Pancreas (tissue), 10 donors: ENCODE measurements at regions of chr4 and their contacts with region 1.

Region 1: GRCh38 chr4:83639849-83640493 is 104.1 kb downstream of the GPAT3 start:
- DNase-seq: peak in 3 of 6 donors; percentile 33 to 66 (median 51)
- ATAC-seq: peak; percentile 83 to 96 (median 90)
- H3K4me3 ChIP-seq: no peak overlapping the region
- H3K27ac ChIP-seq: no peak overlapping the region
- H3K4me1 ChIP-seq: no peaks in the 10 kb centered on the region
- H3K27me3 ChIP-seq: no peaks in the 10 kb centered on the region
- CTCF ChIP-seq: peak; percentile 54 to 81 (median 67)

Region 2: DNA sequence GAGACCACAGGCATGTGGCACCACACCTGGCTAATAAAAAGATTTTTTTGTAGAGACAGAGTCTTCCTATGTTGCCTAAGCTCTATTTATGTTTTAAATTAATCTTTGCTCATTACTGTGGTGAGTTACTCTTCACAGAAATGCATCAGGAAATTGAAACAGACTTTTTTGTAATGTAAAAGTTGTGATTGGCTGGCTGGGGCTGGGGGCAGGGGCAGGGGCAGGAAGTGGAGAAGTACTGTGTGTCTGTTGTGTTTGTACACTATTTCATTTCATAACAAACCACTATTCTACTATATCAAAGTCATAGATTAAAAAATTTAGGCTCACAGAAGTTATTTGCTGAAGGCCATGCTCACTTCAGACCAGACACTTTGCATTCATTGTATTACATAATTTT is 136.0 kb before region 1 on chr4:
- intact Hi-C with region 1: loop called (anchors 5 to 10 kb)
- DNase-seq: no peak
- ATAC-seq: no peak
- H3K4me3 ChIP-seq: no peak overlapping the region
- H3K27ac ChIP-seq: no peak overlapping the region
- H3K4me1 ChIP-seq: no peaks in the 10 kb centered on the region
- H3K27me3 ChIP-seq: no peaks in the 10 kb centered on the region
- CTCF ChIP-seq: no peak

Region 3: DNA sequence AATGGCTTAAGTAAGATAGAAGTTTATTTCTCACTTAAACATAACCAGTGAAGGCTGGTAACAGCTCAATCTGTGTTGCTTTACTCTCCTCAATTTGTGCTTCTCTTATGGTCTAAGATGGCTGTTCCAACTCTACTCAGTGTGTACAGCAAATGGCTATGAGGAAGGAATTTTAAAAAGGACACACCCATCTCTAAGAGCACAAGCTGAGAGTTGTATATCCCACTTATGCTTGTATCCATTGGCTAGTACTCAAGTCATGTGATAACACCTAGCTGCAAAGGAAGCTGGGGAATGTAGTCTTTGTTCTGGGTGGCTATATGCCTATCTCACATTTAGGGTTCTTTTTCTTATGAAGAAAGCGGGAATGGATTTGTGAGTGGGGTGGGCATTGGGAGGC is 40.8 kb before region 1 on chr4:
- intact Hi-C with region 1: no loop called
- DNase-seq: no peak
- ATAC-seq: no peak
- H3K4me3 ChIP-seq: no peak overlapping the region
- H3K27ac ChIP-seq: no peak overlapping the region
- H3K4me1 ChIP-seq: no peaks in the 10 kb centered on the region
- H3K27me3 ChIP-seq: no peaks in the 10 kb centered on the region
- CTCF ChIP-seq: no peak

Region 4: DNA sequence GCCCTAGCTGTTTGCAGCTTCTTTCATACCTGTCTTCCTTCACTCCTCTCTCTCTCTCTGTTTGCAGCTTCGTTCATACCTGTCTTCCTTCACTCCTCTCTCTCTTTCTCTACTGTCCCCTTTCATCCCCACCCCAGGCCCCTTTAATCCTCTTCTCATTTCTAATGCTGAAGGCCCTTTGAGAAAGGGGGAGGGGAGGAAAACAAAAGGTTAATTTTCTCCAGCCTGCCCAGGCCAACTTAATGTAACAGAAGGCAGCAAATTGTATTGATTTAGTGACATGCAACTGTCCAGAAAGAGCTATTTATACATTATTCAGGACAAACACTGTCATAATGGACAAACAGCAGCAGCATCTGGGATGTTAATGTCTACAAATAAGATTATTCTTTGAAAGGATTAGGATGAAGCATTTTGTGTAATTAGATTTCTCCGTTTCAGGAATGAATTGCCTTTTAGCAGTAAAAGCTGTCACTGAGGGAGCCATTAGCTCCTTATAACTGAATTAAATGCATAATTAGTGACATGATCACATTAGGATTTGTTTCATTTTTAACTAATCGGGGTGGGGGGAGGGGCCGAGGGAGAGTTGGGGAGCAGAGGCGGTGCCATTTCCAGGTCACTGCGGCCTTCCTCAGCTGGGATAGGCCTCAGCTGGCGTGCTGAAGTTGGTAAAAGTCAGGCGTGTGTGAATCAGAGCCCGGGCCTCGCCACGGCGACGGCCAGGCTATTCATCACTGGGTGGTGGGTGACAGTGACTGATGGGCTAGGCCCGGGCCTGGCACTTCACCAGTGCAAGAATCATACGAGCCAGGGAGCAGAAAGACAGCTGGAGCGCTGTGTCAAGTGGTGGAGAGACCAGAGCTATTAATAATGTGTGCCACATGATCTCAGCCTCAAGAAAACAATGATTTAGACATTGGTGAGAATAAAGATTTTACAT is 684.6 kb after region 1 on chr4:
- intact Hi-C with region 1: no loop called
- DNase-seq: peak in 1 of 6 donors; percentile 23
- ATAC-seq: peak in 2 of 4 donors; percentile 21 to 55
- H3K4me3 ChIP-seq: no peak overlapping the region
- H3K27ac ChIP-seq: no peak overlapping the region
- H3K4me1 ChIP-seq: no peaks in the 10 kb centered on the region
- H3K27me3 ChIP-seq: no peaks in the 10 kb centered on the region
- CTCF ChIP-seq: no peak

Region 5: GRCh38 chr4:84503495-84504437 is 863.8 kb after region 1 on chr4:
- intact Hi-C with region 1: loop called in 1 of 3 experiments (anchors 10 kb)
- DNase-seq: peak in 2 of 6 donors; percentile 25 to 40
- ATAC-seq: peak; percentile 33 to 56 (median 51)
- H3K4me3 ChIP-seq: no peak overlapping the region
- H3K27ac ChIP-seq: no peak overlapping the region
- H3K4me1 ChIP-seq: peaks cover 0 to 3% (median 0%) of the 10 kb centered on the region in 3 donors
- H3K27me3 ChIP-seq: peaks cover 0 to 23% (median 3%) of the 10 kb centered on the region in 4 donors
- CTCF ChIP-seq: peak in 3 of 4 donors; percentile 42 to 57 (median 46)